ENCODE measurements at regions of chr6 and their contacts with region 1.

Region 1: DNA sequence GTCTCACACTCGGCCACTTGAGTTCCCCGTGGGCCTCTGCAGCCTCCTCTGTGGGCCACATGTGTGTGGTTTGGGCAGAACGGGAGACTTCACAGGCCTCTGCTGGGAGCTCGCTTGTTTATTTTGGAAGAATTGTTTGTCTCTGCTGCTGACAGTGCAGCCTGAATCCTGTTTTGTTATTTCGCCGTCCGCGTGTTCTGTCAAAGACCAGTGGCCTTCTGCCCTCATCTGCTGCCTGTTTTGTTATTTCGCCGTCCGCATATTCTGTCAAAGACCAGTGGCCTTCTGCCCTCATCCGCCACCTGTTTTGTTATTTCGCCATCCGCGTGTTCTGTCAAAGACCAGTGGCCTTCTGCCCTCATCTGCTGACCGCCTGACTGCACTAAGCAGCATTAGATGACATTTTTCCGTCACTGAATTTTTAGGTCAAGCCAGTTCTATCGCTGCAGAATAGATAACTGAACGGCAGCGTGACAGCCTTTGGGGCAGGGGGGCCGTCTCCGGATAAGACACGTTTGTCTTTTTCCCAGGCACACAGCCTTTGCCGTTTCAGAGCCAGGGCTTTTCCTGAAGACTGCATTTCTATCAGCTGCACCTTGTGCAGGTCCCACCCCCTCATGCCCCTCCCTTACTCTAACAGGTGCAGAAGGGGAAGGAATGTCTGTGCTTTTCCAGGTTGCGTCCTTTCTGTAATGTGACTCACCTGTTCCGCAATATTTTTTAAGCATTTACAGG is 158.5 kb upstream of the AFDN start:
- DNase-seq: peak; percentile 96
- ATAC-seq: peak; percentile 84
- H3K4me3 ChIP-seq: peak overlapping the region; percentile 1 to 54 (median 6); a peak in 3 of 6 replicates
- H3K27ac ChIP-seq: peak overlapping the region; percentile 85
- H3K4me1 ChIP-seq: peaks cover 100% of the 10 kb centered on the region
- H3K27me3 ChIP-seq: no peaks in the 10 kb centered on the region
- CTCF ChIP-seq: peak; percentile 57
- EP300 ChIP-seq: peak in 1 of 2 experiments; percentile 90; a peak in 2 of 4 replicates
- POLR2A ChIP-seq: no peak
- RAD21 ChIP-seq: peak; percentile 41

Region 2: DNA sequence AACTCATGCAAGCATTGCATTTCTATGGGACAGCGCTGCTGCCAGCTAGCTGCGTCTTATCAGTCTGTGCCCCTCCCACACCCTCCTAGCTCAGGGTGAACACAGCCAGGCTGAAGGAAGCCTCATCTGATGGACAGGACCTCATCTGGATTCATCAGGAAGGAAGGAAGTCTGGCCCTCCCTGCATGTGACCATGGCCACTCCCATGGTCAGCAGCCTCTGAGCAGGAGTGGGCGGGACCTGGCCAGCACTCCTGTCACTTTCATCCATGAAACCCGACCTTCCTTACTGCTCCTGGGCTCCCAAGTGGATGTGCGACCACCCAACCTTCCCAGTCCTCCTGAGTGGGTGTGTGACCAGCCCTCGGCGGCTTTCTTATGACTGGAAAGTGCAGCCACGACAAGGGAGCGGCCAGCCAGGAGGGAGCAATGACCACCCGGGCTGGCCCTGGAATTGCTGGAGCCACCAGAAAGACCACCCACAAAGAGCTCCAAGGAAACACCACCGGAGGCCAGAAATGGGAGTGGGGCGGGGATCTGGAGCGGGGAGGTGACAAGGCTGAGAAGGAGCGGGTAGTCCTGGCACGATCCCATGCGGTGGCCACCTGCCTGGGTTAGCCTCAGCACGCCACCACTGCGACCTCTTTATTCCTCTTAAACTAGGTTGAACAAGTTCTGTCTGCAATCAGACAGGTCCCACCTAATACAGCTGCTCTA is 102.1 kb before region 1 on chr6:
- CTCF ChIA-PET with region 1: no interaction called
- POLR2A ChIA-PET with region 1: no interaction called
- in situ Hi-C with region 1: loop called (anchors 5 kb)
- intact Hi-C with region 1: no loop called
- DNase-seq: peak; percentile 27
- ATAC-seq: peak; percentile 56
- H3K4me3 ChIP-seq: no peak overlapping the region
- H3K27ac ChIP-seq: no peak overlapping the region
- H3K4me1 ChIP-seq: peaks cover 37% of the 10 kb centered on the region
- H3K27me3 ChIP-seq: peaks cover 7% of the 10 kb centered on the region in 2 experiments; a peak in 3 of 5 replicates
- CTCF ChIP-seq: no peak
- EP300 ChIP-seq: no peak
- POLR2A ChIP-seq: no peak
- RAD21 ChIP-seq: no peak

Region 3: GRCh38 chr6:167683028-167683862 is 15.1 kb after region 1 on chr6:
- CTCF ChIA-PET with region 1: no interaction called
- POLR2A ChIA-PET with region 1: interaction called, 9 read pairs
- in situ Hi-C with region 1: no loop called
- intact Hi-C with region 1: loop called (anchors 1 kb)
- DNase-seq: peak; percentile 100
- ATAC-seq: peak; percentile 93
- H3K4me3 ChIP-seq: peak overlapping the region in 1 of 3 experiments; percentile 35; a peak in 2 of 6 replicates
- H3K27ac ChIP-seq: peak overlapping the region; percentile 96
- H3K4me1 ChIP-seq: peaks cover 77% of the 10 kb centered on the region
- H3K27me3 ChIP-seq: no peaks in the 10 kb centered on the region
- CTCF ChIP-seq: peak; percentile 33
- EP300 ChIP-seq: peak; percentile 99
- POLR2A ChIP-seq: peak in 1 of 2 experiments; percentile 42; a peak in 2 of 4 replicates
- RAD21 ChIP-seq: peak; percentile 70; the same call in 1 of the 2 replicates